Caki2 (cell line): ENCODE measurements at regions of chr7 and their contacts with region 1.

Region 1: GRCh38 chr7:56106108-56107073 is at the start of gene CHCHD2:
- DNase-seq: peak; percentile 97
- total RNA-seq, gene CHCHD2: 762 and 771 TPM in 2 replicates

Region 2: DNA sequence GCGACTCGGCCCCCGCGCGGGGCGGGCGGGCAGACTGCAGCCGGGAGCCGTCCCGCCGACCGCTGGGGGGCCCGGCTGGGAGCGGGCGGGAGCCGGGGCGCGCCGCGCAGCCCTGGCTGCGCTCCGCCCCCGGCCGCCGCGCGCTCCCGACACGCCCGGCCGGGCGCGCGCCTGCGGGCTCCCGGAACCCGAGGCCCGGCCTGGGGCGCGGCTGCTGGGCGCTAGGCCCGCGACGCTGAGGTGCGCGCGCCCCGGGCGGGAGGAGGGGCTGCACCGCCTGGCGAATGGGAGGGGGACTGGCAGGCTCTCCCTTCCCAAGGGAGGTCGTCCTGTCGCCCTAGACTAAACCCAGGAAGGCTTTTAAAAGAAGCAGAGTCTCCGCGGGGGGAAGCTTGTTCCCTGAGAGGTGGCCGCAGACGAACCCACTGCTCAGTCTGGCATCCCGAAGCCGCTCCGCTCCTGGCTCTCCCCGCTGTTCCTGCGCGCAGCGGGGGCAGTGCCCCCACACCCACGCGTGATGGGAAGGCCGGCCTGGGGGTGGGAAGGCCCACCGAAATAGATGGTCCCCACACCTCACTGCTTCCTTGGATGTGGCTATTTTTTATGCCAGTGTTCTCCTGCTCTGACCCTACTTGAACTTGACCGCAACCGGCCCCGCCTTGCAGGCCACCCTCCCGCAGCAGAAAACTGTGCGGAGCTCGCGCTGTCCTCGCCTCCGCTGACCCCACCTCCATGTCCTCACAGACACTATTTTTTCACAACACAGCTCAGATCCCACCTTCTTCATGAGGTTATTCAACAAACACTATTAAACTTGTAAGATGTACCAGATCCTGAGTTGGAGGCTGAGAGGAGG is 533.8 kb before region 1 on chr7 and contains the start of gene VOPP1:
- in situ Hi-C with region 1: loop called (anchors 10 kb)
- DNase-seq: peak; percentile 66
- total RNA-seq, gene VOPP1: 101 and 113 TPM in 2 replicates